CD8-positive, alpha-beta T cell (primary cell): ENCODE measurements at regions of chr5 and their contacts with region 1.

Region 1: GRCh38 chr5:54217826-54218503 is 92.4 kb downstream of the ARL15 start:
- DNase-seq: peak in 2 of 9 experiments; percentile 44 to 53
- ATAC-seq: no peak
- H3K4me3 ChIP-seq: no peak overlapping the region
- H3K4me3 Mint-ChIP-seq: no peak overlapping the region
- H3K27ac ChIP-seq: no peak overlapping the region
- H3K27ac Mint-ChIP-seq: no peak overlapping the region
- H3K4me1 ChIP-seq: no peaks in the 10 kb centered on the region
- H3K4me1 Mint-ChIP-seq: peaks cover 15% of the 10 kb centered on the region
- H3K27me3 ChIP-seq: no peaks in the 10 kb centered on the region
- H3K27me3 Mint-ChIP-seq: no peaks in the 10 kb centered on the region
- CTCF ChIP-seq: peak; percentile 48

Region 2: DNA sequence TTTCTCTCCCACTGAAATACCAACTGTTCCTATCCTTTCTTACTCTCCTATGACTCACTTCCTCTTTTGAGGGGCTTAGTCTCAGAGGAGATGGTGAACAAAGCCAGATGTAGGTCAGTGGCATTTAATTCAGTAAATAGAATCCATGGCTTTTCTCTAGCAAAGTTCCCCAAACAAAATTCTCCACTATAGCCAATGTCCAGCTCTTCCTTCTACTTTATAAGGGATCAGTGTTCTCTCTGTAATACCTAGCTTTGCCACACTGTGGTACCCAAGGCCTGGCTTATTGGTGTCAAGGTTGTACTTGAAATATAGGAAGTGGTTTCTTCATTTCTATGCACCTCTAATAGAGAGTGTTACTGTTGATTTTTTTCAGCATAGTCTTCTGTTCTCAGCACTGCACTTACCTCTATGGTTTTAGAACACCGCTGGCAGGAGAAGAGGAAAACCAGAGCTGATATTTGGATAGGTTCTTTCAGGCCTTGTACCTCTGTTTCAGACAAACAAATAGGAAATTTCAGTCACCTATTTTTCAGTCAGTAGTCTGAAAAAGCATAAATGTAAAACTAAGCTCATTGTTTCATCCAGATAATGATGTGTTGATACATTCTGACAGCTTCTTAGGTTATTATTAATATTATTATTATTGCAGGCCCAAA is 1269.4 kb before region 1 on chr5:
- CTCF ChIA-PET with region 1: no interaction called
- POLR2A ChIA-PET with region 1: no interaction called
- intact Hi-C with region 1: loop called in 1 of 2 experiments (anchors 2 kb)
- DNase-seq: peak; percentile 21 to 78 (median 63)
- ATAC-seq: peak; percentile 100
- H3K4me3 ChIP-seq: no peak overlapping the region
- H3K4me3 Mint-ChIP-seq: no peak overlapping the region
- H3K27ac ChIP-seq: no peak overlapping the region
- H3K27ac Mint-ChIP-seq: no peak overlapping the region
- H3K4me1 ChIP-seq: peaks cover 3% of the 10 kb centered on the region
- H3K4me1 Mint-ChIP-seq: peaks cover 20% of the 10 kb centered on the region
- H3K27me3 ChIP-seq: no peaks in the 10 kb centered on the region
- H3K27me3 Mint-ChIP-seq: no peaks in the 10 kb centered on the region
- CTCF ChIP-seq: peak; percentile 85

Region 3: GRCh38 chr5:53123702-53124101 is 1094.3 kb before region 1 on chr5:
- CTCF ChIA-PET with region 1: no interaction called
- POLR2A ChIA-PET with region 1: no interaction called
- intact Hi-C with region 1: loop called in 1 of 2 experiments (anchors 5 kb)
- DNase-seq: no peak
- ATAC-seq: no peak
- H3K4me3 ChIP-seq: no peak overlapping the region
- H3K4me3 Mint-ChIP-seq: no peak overlapping the region
- H3K27ac ChIP-seq: no peak overlapping the region
- H3K27ac Mint-ChIP-seq: no peak overlapping the region
- H3K4me1 ChIP-seq: no peaks in the 10 kb centered on the region
- H3K4me1 Mint-ChIP-seq: no peaks in the 10 kb centered on the region
- H3K27me3 ChIP-seq: no peaks in the 10 kb centered on the region
- H3K27me3 Mint-ChIP-seq: no peaks in the 10 kb centered on the region
- CTCF ChIP-seq: no peak

Region 4: DNA sequence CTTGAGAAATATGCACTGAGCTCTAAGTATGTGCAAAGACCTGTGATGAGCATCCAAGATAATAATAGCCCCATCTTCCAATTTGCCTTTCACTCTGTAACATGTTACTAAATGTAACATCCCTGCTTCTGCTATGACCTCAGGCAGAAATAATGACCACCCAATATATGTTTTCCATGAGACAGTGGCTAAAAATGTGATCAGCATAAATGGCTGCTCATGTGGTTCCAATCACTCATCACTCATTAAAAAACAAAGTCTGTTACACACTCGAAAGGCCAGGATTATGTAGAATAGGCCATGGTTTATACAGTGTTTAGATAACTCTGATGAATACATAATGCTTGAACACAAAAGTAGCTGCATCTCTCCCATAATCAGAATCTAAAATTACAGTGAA is 1037.0 kb before region 1 on chr5:
- CTCF ChIA-PET with region 1: no interaction called
- POLR2A ChIA-PET with region 1: no interaction called
- intact Hi-C with region 1: loop called in 1 of 2 experiments (anchors 5 kb)
- DNase-seq: no peak
- ATAC-seq: no peak
- H3K4me3 ChIP-seq: no peak overlapping the region
- H3K4me3 Mint-ChIP-seq: no peak overlapping the region
- H3K27ac ChIP-seq: no peak overlapping the region
- H3K27ac Mint-ChIP-seq: no peak overlapping the region
- H3K4me1 ChIP-seq: no peaks in the 10 kb centered on the region
- H3K4me1 Mint-ChIP-seq: peaks cover 5% of the 10 kb centered on the region
- H3K27me3 ChIP-seq: no peaks in the 10 kb centered on the region
- H3K27me3 Mint-ChIP-seq: no peaks in the 10 kb centered on the region
- CTCF ChIP-seq: no peak

Region 5: GRCh38 chr5:54229041-54229780 is 11.2 kb after region 1 on chr5:
- CTCF ChIA-PET with region 1: interaction called, 16 read pairs
- POLR2A ChIA-PET with region 1: no interaction called
- intact Hi-C with region 1: no loop called
- DNase-seq: peak; percentile 43 to 80 (median 68)
- ATAC-seq: peak; percentile 89
- H3K4me3 ChIP-seq: no peak overlapping the region
- H3K4me3 Mint-ChIP-seq: no peak overlapping the region
- H3K27ac ChIP-seq: no peak overlapping the region
- H3K27ac Mint-ChIP-seq: no peak overlapping the region
- H3K4me1 ChIP-seq: no peaks in the 10 kb centered on the region
- H3K4me1 Mint-ChIP-seq: peaks cover 8% of the 10 kb centered on the region
- H3K27me3 ChIP-seq: no peaks in the 10 kb centered on the region
- H3K27me3 Mint-ChIP-seq: no peaks in the 10 kb centered on the region
- CTCF ChIP-seq: peak; percentile 96